PC-9 (cell line): ENCODE measurements at regions of chr21 and their contacts with region 1.

Region 1: GRCh38 chr21:35138665-35139381 is 89.7 kb upstream of the RUNX1 start:
- DNase-seq: peak; percentile 74 to 95
- H3K4me3 ChIP-seq: peak overlapping the region; percentile 7; the same call in 1 of the 2 replicates
- H3K27ac ChIP-seq: peak overlapping the region; percentile 99
- H3K4me1 ChIP-seq: peaks cover 53% of the 10 kb centered on the region
- H3K27me3 ChIP-seq: no peaks in the 10 kb centered on the region
- CTCF ChIP-seq: no peak

Region 2: GRCh38 chr21:34693192-34693810 is 445.5 kb before region 1 on chr21:
- CTCF ChIA-PET with region 1: no interaction called
- POLR2A ChIA-PET with region 1: no interaction called
- intact Hi-C with region 1: loop called (anchors 5 kb)
- DNase-seq: peak; percentile 39
- H3K4me3 ChIP-seq: no peak overlapping the region
- H3K27ac ChIP-seq: 0 out of 2 replicates have a peak overlapping the region, but pooled peaks have one; percentile 89
- H3K4me1 ChIP-seq: peaks cover 38% of the 10 kb centered on the region
- H3K27me3 ChIP-seq: no peaks in the 10 kb centered on the region
- CTCF ChIP-seq: peak; percentile 86

Region 3: GRCh38 chr21:34857874-34858273 is 280.9 kb before region 1 on chr21:
- CTCF ChIA-PET with region 1: no interaction called
- POLR2A ChIA-PET with region 1: no interaction called
- intact Hi-C with region 1: no loop called
- DNase-seq: no peak
- H3K4me3 ChIP-seq: no peak overlapping the region
- H3K27ac ChIP-seq: no peak overlapping the region
- H3K4me1 ChIP-seq: no peaks in the 10 kb centered on the region
- H3K27me3 ChIP-seq: no peaks in the 10 kb centered on the region
- CTCF ChIP-seq: no peak

Region 4: GRCh38 chr21:35198031-35198431 is 59.2 kb after region 1 on chr21:
- CTCF ChIA-PET with region 1: no interaction called
- POLR2A ChIA-PET with region 1: interaction called, 5 read pairs
- intact Hi-C with region 1: loop called (anchors 2 kb)
- DNase-seq: peak; percentile 48 to 97
- H3K4me3 ChIP-seq: peak overlapping the region; percentile 22; the same call in 1 of the 2 replicates
- H3K27ac ChIP-seq: peak overlapping the region; percentile 100
- H3K4me1 ChIP-seq: peaks cover 48% of the 10 kb centered on the region
- H3K27me3 ChIP-seq: no peaks in the 10 kb centered on the region
- CTCF ChIP-seq: no peak

Region 5: GRCh38 chr21:35226948-35227744 is 88.3 kb after region 1 on chr21:
- CTCF ChIA-PET with region 1: interaction called, 3 read pairs
- POLR2A ChIA-PET with region 1: interaction called, 7 read pairs
- intact Hi-C with region 1: loop called (anchors 2 kb)
- DNase-seq: no peak
- H3K4me3 ChIP-seq: peak overlapping the region; percentile 13; the same call in 1 of the 2 replicates
- H3K27ac ChIP-seq: peak overlapping the region; percentile 99
- H3K4me1 ChIP-seq: peaks cover 85% of the 10 kb centered on the region
- H3K27me3 ChIP-seq: no peaks in the 10 kb centered on the region
- CTCF ChIP-seq: no peak

Region 6: GRCh38 chr21:35400233-35400957 is 261.6 kb after region 1 on chr21:
- CTCF ChIA-PET with region 1: interaction called, 3 read pairs
- POLR2A ChIA-PET with region 1: no interaction called
- intact Hi-C with region 1: loop called (anchors 1 kb)
- DNase-seq: peak; percentile 19 to 77
- H3K4me3 ChIP-seq: no peak overlapping the region
- H3K27ac ChIP-seq: peak overlapping the region; percentile 52
- H3K4me1 ChIP-seq: peaks cover 32% of the 10 kb centered on the region
- H3K27me3 ChIP-seq: no peaks in the 10 kb centered on the region
- CTCF ChIP-seq: peak; percentile 68